OCI-LY7 (cell line): ENCODE measurements at regions of chr11 and their contacts with region 1.

Region 1: GRCh38 chr11:63142459-63142858 is 1.6 kb downstream of the SLC22A24 start:
- DNase-seq: no peak
- H3K4me3 ChIP-seq: no peak overlapping the region
- H3K27ac ChIP-seq: no peak overlapping the region
- H3K4me1 ChIP-seq: no peaks in the 10 kb centered on the region
- CTCF ChIP-seq: no peak

Region 2: DNA sequence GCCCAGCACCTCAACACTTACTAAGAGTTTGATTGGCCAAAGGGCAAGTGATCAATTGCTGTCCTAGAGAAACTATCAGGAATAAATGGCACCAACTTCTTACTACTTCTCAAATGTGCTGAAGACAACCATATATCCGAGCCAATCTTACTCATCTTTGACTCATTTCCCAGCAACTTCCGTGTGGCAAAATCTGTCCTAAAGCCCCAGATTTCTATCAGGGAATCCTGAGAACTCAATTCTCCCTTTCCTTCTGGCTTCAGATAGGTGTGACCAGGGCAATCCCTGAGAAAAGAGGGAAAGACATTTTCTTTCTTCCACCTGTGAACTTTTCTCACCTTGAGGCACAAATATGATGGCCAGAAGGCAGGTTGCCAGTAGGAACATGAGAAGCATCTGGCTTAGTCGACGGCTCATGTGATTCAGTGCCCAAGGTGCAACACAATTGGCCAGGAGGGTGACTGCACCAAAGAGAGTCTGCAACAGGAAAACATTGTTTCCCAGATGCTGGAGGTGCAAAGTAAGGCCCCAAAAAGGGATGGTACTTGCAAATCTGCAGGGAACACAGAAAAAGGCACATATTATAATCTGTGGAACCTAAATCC is 23.3 kb after region 1 on chr11:
- CTCF ChIA-PET with region 1: no interaction called
- POLR2A ChIA-PET with region 1: no interaction called
- intact Hi-C with region 1: loop called (anchors 2 kb)
- DNase-seq: no peak
- H3K4me3 ChIP-seq: no peak overlapping the region
- H3K27ac ChIP-seq: no peak overlapping the region
- H3K4me1 ChIP-seq: no peaks in the 10 kb centered on the region
- CTCF ChIP-seq: no peak

Region 3: GRCh38 chr11:63395697-63396096 is 253.2 kb after region 1 on chr11:
- CTCF ChIA-PET with region 1: no interaction called
- POLR2A ChIA-PET with region 1: no interaction called
- intact Hi-C with region 1: no loop called
- DNase-seq: no peak
- H3K4me3 ChIP-seq: no peak overlapping the region
- H3K27ac ChIP-seq: no peak overlapping the region
- H3K4me1 ChIP-seq: no peaks in the 10 kb centered on the region
- CTCF ChIP-seq: no peak